Calu3 (cell line): ENCODE measurements at regions of chr12 and their contacts with region 1.

Region 1: DNA sequence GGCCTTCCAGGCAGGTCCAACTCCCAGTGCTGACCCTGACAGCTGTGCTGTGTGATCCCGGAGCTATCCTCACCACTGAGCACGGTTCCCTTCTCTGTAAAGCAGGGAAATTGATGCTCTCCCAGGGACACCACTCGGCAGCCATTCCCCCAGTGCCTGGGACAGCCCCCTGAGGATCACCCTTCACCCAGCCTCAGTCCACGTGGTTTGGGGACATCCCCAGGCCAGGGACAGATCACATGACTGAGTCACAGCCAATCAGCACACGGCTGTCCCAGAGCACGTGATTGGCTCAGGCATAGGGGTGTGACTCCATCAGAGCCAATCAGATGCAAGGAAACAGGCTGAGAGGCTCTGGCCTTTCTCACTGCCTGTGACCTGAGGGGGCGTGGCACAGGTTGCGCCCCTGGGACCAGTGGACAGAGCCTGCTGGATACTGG is 68.8 kb upstream of the SFSWAP start:
- DNase-seq: no peak
- H3K4me3 Mint-ChIP-seq: no peak overlapping the region
- H3K27ac Mint-ChIP-seq: no peak overlapping the region
- H3K4me1 Mint-ChIP-seq: no peaks in the 10 kb centered on the region
- H3K27me3 Mint-ChIP-seq: peaks cover 90% of the 10 kb centered on the region
- CTCF ChIP-seq: no peak

Region 2: DNA sequence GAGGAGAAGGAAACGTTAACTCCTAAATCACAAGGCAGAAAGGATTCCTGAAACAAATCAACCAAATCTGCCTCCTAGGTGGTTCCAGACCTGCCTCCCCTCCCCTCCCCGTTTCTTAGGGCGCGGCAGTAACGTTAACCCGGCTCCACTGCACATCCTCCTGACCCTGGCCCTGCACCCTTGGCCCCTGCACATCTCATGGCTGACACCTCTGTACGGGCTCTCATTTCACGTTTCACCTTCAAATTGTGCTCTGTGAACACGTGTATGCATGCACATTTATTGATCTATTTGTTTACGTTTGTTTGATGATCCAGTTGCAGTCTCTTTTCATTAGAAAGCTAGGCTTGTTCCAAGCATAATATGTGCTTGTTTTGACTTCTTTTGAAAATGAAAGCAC is 330.4 kb before region 1 on chr12:
- CTCF ChIA-PET with region 1: no interaction called
- intact Hi-C with region 1: loop called (anchors 5 kb)
- DNase-seq: no peak
- H3K4me3 Mint-ChIP-seq: no peak overlapping the region
- H3K27ac Mint-ChIP-seq: no peak overlapping the region
- H3K4me1 Mint-ChIP-seq: peaks cover 8% of the 10 kb centered on the region
- H3K27me3 Mint-ChIP-seq: peaks cover 62% of the 10 kb centered on the region
- CTCF ChIP-seq: no peak